Caco-2 (cell line): ENCODE measurements at regions of chr2 and their contacts with region 1.

Region 1: DNA sequence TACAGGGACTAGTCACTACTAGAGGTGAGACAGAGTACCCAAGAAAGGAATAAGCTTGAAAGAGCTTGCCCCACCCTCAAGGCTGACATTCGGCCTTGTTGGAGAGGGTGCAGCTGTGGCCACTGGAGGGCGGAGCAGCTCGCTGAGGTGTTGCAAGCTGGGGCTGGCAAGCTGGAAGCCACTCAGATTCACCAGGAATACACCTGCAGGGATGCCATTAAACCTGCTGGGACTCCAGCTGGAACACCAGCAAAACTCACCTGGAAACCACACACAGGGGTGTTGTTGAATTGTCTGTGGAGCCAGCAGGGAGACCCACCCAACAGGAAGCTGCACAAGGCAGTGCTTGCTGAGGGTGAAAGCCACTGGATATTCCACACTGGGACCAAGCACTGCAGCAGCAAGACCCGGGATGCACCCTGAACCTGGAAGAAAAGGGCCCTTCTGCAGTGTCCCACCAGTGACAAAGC is 26.1 kb downstream of the KCTD18 start:
- DNase-seq: peak; percentile 76 to 78
- H3K4me3 ChIP-seq: no peak overlapping the region
- H3K4me3 Mint-ChIP-seq: no peak overlapping the region
- H3K27ac Mint-ChIP-seq: no peak overlapping the region
- H3K4me1 ChIP-seq: peaks cover 26% of the 10 kb centered on the region
- H3K4me1 Mint-ChIP-seq: peaks cover 27% of the 10 kb centered on the region
- H3K27me3 ChIP-seq: no peaks in the 10 kb centered on the region
- H3K27me3 Mint-ChIP-seq: no peaks in the 10 kb centered on the region
- CTCF ChIP-seq: peak; percentile 52 to 85

Region 2: DNA sequence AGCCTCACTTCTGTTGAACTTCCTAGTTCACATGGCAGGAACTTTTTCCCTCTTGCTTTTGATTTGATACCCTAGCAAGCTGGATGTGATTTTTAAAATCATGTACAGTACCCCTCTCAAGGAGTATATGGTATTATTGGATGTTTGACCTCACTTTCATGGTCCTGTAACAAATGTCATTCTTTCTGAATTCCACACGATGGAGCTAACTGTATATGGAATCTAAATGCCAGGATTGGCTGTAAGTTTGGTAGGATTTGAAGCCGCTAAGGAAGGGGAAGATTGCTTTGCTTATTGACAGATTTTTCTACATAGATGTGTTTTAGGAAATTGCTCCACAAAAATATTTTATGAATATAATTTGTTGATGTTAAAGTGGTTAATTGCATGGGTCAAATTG is 510.1 kb before region 1 on chr2:
- CTCF ChIA-PET with region 1: interaction called, 16 read pairs
- POLR2A ChIA-PET with region 1: no interaction called
- intact Hi-C with region 1: loop called (anchors 1 kb)
- DNase-seq: no peak
- H3K4me3 ChIP-seq: no peak overlapping the region
- H3K4me3 Mint-ChIP-seq: no peak overlapping the region
- H3K27ac Mint-ChIP-seq: no peak overlapping the region
- H3K4me1 ChIP-seq: peaks cover 14% of the 10 kb centered on the region
- H3K4me1 Mint-ChIP-seq: peaks cover 15% of the 10 kb centered on the region
- H3K27me3 ChIP-seq: no peaks in the 10 kb centered on the region
- H3K27me3 Mint-ChIP-seq: no peaks in the 10 kb centered on the region
- CTCF ChIP-seq: peak; percentile 46 to 76

Region 3: DNA sequence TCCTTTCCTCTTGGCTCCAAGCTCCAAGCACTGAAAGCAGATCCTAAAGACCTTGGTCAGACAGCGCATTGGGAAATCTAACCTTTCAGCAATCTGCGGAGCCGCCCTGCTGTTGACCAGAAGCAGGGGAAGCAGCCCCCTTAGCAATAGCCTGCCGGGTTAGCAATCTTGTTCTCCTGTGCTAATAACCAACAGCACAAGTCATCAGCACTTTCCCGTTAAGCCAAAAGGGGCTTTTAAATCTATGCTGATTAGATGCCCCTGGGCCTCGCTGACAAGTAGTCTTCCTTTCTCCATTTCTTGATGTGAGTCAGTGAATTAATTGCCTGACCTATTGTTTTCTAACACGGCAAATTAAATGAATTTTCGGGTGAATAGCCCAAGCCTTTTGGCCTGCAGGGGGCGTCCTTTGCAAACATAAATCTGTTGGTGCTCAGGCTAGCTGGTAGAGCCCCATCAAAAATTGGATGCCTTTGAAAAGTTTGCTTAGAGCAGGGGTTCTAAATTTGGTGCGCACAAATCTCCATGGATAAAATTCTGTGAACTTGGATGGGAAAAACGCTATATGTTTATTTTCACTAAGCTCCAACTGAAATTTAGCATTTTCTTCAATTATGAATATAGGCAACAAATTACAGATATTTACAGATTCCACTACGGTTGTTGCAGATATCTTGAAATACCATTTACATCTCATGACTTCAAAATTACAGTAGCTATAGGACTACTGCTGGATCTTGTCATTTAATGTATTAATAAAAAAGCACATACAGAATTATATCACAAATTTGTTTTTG is 503.7 kb before region 1 on chr2:
- CTCF ChIA-PET with region 1: interaction called, 5 read pairs
- POLR2A ChIA-PET with region 1: no interaction called
- intact Hi-C with region 1: loop called (anchors 2 kb)
- DNase-seq: peak; percentile 76 to 83
- H3K4me3 ChIP-seq: no peak overlapping the region
- H3K4me3 Mint-ChIP-seq: peak overlapping the region; percentile 9
- H3K27ac Mint-ChIP-seq: no peak overlapping the region
- H3K4me1 ChIP-seq: peaks cover 20% of the 10 kb centered on the region
- H3K4me1 Mint-ChIP-seq: peaks cover 20% of the 10 kb centered on the region
- H3K27me3 ChIP-seq: no peaks in the 10 kb centered on the region
- H3K27me3 Mint-ChIP-seq: no peaks in the 10 kb centered on the region
- CTCF ChIP-seq: peak; percentile 74 to 87

Region 4: DNA sequence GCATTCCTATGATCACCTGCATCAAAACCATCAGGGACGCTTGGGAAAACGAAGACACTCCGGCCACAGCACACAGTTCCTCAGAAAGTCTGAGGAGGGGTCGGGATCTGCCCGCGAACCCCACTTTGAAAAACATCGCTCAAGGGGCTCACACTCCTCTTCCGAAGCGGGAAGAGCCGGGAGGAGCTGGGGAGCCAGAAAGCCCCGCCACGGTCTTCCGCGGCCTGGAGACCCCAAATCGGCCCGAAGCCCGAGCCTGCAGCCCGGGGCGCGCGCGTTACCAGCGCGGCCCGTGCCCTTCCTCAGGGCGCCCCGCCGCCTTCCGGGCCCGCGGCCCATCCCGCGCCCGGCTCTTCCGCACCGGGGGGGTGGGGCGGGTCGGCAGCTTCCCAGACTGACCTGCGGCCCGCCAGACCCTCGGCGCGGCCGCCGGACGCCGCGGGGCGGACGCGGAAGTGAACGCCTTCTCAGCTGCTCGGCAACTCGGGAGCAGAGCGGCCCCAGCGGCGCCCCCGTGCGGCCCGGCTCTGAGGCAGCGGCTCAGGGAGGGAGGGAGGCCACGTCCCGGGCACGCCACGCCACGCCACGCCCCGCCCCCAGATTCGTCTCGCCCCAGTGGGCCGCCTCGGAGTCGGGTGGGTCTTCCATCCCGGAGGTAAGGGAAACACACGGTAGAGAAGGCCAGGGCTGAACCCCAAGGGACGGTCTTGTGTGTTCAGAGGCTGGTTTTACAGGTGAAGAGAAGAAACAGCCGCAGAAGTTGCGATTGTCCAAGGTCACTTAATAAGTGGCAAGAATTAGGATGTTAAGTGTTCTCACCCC is 26.1 kb after region 1 on chr2 and contains the start of gene KCTD18:
- CTCF ChIA-PET with region 1: interaction called, 18 read pairs
- POLR2A ChIA-PET with region 1: no interaction called
- intact Hi-C with region 1: loop called (anchors 1 kb)
- DNase-seq: peak; percentile 92 to 96
- H3K4me3 ChIP-seq: peak within 1 kb of the TSS; percentile 72
- H3K4me3 Mint-ChIP-seq: peak within 1 kb of the TSS; percentile 77
- H3K27ac Mint-ChIP-seq: peak within 1 kb of the TSS; percentile 80
- H3K4me1 ChIP-seq: peaks cover 19% of the 10 kb centered on the region
- H3K4me1 Mint-ChIP-seq: peaks cover 7% of the 10 kb centered on the region
- H3K27me3 ChIP-seq: no peaks in the 10 kb centered on the region
- H3K27me3 Mint-ChIP-seq: no peaks in the 10 kb centered on the region
- CTCF ChIP-seq: peak; percentile 88
- total RNA-seq, gene KCTD18: 8.6 and 9.3 TPM in 2 replicates

Region 5: DNA sequence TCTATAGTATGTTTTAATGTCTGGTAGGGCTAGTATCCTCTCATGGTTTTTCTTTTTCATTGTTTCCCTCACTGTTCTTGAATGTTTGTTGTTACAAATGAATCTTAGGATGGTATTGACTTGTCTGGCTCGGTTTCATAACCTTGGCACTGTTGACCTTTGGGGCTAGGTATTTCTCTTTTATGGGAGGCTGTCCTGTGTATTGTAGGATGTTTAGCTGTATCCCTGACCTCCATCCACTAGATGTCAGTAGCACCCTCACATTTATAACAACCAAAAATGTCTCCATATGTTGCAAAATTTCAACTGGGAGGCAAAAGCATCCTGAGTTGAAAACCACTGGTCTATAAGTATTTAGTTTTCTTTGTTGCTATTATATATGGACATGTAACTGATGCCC is 95.0 kb after region 1 on chr2:
- CTCF ChIA-PET with region 1: interaction called, 3 read pairs
- POLR2A ChIA-PET with region 1: no interaction called
- intact Hi-C with region 1: loop called (anchors 5 kb)
- DNase-seq: peak in 1 of 2 experiments; percentile 65
- H3K4me3 ChIP-seq: no peak overlapping the region
- H3K4me3 Mint-ChIP-seq: no peak overlapping the region
- H3K27ac Mint-ChIP-seq: no peak overlapping the region
- H3K4me1 ChIP-seq: peaks cover 6% of the 10 kb centered on the region; the same call in 1 of the 2 replicates
- H3K4me1 Mint-ChIP-seq: peaks cover 7% of the 10 kb centered on the region
- H3K27me3 ChIP-seq: no peaks in the 10 kb centered on the region
- H3K27me3 Mint-ChIP-seq: no peaks in the 10 kb centered on the region
- CTCF ChIP-seq: peak; percentile 68 to 76

Region 6: GRCh38 chr2:200735061-200735460 is 251.3 kb after region 1 on chr2:
- CTCF ChIA-PET with region 1: interaction called, 21 read pairs
- POLR2A ChIA-PET with region 1: no interaction called
- intact Hi-C with region 1: loop called (anchors 5 kb)
- DNase-seq: no peak
- H3K4me3 ChIP-seq: no peak overlapping the region
- H3K4me3 Mint-ChIP-seq: no peak overlapping the region
- H3K27ac Mint-ChIP-seq: no peak overlapping the region
- H3K4me1 ChIP-seq: no peaks in the 10 kb centered on the region; the same call in 1 of the 2 replicates
- H3K4me1 Mint-ChIP-seq: peaks cover 8% of the 10 kb centered on the region
- H3K27me3 ChIP-seq: no peaks in the 10 kb centered on the region; the same call in 1 of the 2 replicates
- H3K27me3 Mint-ChIP-seq: no peaks in the 10 kb centered on the region
- CTCF ChIP-seq: no peak